Naive thymus-derived CD8-positive, alpha-beta T cell (primary cell): ENCODE measurements at regions of chr21 and their contacts with region 1.

Region 1: GRCh38 chr21:31282095-31282709 is 61.9 kb downstream of the TIAM1 start:
- DNase-seq: no peak
- ATAC-seq: no peak
- H3K4me3 Mint-ChIP-seq: peak overlapping the region in 9 of 10 donors; percentile 3 to 70 (median 59)
- H3K27ac Mint-ChIP-seq: peak overlapping the region in 9 of 10 donors; percentile 48 to 93 (median 77)
- H3K4me1 Mint-ChIP-seq: peaks cover 12 to 36% (median 33%) of the 10 kb centered on the region in 4 donors
- H3K27me3 Mint-ChIP-seq: no peaks in the 10 kb centered on the region

Region 2: DNA sequence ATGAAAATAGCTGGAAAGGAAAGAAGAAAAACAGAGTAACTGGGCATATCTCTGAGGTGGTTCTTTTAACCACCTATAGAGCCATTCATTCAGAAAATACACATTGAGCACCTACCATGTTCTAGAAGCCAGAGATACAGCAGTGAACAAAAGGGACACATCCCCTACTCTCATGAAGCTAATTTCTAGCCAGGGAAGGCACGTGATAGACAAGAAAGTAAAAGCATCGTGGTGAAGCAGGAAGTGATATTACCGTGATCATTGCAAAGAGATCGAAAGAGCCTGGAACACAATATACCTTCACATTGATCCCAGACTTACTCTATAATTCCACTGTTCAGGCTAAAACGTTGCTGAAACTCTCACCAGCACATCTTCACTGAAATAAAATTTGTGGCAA is 14.1 kb before region 1 on chr21:
- POLR2A ChIA-PET with region 1: interaction called, 15 read pairs
- DNase-seq: peak in 3 of 10 donors; percentile 17 to 34 (median 32)
- ATAC-seq: peak; percentile 72 to 86
- H3K4me3 Mint-ChIP-seq: peak overlapping the region; percentile 55 to 85 (median 71)
- H3K27ac Mint-ChIP-seq: peak overlapping the region; percentile 18 to 90 (median 78)
- H3K4me1 Mint-ChIP-seq: peaks cover 21 to 56% (median 39%) of the 10 kb centered on the region in 4 donors
- H3K27me3 Mint-ChIP-seq: peaks cover 0 to 1% (median 0%) of the 10 kb centered on the region in 5 donors

Region 3: DNA sequence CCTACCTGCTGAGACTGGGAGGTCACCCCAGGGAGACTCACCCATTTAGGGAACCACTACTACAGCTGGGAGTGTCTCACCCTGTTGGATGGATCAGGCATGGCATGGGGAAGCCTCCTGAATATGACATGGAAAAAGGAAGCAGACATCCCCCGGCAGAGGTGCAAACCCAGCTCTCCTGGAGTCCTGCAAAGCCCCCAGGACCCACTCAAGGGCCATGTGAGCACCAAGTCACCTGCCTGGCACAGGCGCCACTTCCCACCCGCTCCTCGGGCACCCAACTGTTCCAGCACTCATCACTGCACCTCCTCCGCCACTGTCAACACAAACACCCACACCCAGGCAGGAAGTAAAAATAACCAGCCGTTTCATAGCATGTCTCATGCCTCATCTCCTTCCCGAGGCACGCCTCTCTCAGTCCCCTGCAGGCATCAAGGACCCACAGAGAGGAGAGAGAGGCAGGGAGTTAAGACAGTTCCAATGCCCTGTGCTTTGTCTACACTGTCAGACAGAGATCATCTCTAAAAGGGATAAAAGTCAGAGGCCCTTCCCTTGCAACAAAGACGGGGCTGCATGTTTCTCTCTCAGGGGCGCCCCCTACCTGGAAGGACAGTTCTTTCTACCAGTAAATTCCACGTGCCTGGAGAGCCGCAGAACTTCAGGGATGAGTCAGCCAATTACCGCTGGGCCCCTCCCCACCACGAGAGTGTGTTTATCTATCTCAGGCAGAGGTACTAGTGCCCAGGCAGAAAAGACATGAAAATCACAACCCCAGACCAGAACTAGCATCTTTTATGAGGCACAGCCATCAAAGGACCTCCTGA is 227.2 kb after region 1 on chr21:
- POLR2A ChIA-PET with region 1: no interaction called
- DNase-seq: peak; percentile 15 to 68 (median 48)
- ATAC-seq: peak; percentile 70 to 71
- H3K4me3 Mint-ChIP-seq: peak overlapping the region in 8 of 10 donors; percentile 0 to 51 (median 34)
- H3K27ac Mint-ChIP-seq: peak overlapping the region; percentile 23 to 86 (median 58)
- H3K4me1 Mint-ChIP-seq: peaks cover 16 to 35% (median 31%) of the 10 kb centered on the region in 4 donors
- H3K27me3 Mint-ChIP-seq: no peaks in the 10 kb centered on the region